ENCODE measurements at regions of chr17 and their contacts with region 1.

Region 1: GRCh38 chr17:65231662-65232335 is 94.6 kb downstream of the RGS9 start:
- DNase-seq: peak in 6 of 9 donors; percentile 31 to 49 (median 39)
- ATAC-seq: peak; percentile 52
- H3K4me3 ChIP-seq: no peak overlapping the region
- H3K4me3 Mint-ChIP-seq: no peak overlapping the region
- H3K27ac ChIP-seq: no peak overlapping the region
- H3K27ac Mint-ChIP-seq: peak overlapping the region in 1 of 9 donors; percentile 51
- H3K4me1 ChIP-seq: peaks cover 14 to 24% of the 10 kb centered on the region in 2 donors
- H3K4me1 Mint-ChIP-seq: peaks cover 14 to 48% (median 18%) of the 10 kb centered on the region in 7 donors
- H3K27me3 ChIP-seq: no peaks in the 10 kb centered on the region
- H3K27me3 Mint-ChIP-seq: peaks cover 0 to 29% (median 5%) of the 10 kb centered on the region in 5 donors

Region 2: GRCh38 chr17:65074778-65075250 is 157.0 kb before region 1 on chr17:
- CTCF ChIA-PET with region 1: no interaction called
- POLR2A ChIA-PET with region 1: no interaction called
- intact Hi-C with region 1: no loop called
- DNase-seq: no peak
- ATAC-seq: no peak
- H3K4me3 ChIP-seq: no peak overlapping the region
- H3K4me3 Mint-ChIP-seq: no peak overlapping the region
- H3K27ac ChIP-seq: no peak overlapping the region
- H3K27ac Mint-ChIP-seq: no peak overlapping the region
- H3K4me1 ChIP-seq: no peaks in the 10 kb centered on the region
- H3K4me1 Mint-ChIP-seq: peaks cover 0 to 4% (median 0%) of the 10 kb centered on the region in 7 donors
- H3K27me3 ChIP-seq: no peaks in the 10 kb centered on the region
- H3K27me3 Mint-ChIP-seq: peaks cover 0 to 5% (median 0%) of the 10 kb centered on the region in 5 donors

Region 3: DNA sequence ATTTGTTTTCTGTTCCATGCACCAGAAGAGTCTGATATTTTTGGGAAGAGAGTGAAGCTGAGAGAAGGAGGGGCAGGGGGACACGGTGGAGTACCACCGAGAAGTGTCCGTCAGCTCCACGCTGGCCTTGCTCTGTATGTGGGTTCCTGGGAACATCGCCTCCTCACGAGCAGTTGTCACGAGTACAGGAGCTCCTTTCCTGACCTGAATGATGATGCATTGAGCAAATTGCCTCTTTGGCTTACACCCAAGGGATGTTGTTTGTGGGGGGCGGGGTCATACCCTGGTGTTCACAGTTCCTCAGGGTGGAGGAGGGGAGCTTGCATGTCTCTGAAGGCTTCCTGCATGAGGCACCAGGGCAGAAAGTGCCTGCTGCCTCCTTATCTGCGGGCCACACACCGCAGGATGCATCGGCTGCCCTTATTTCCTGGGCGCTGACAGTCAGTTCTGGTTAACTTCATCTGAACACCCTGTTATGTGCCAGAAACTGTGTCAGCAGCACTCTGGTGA is 58.5 kb before region 1 on chr17:
- CTCF ChIA-PET with region 1: no interaction called
- POLR2A ChIA-PET with region 1: no interaction called
- intact Hi-C with region 1: no loop called
- DNase-seq: peak; percentile 16 to 73 (median 60)
- ATAC-seq: peak; percentile 90
- H3K4me3 ChIP-seq: peak overlapping the region; percentile 8
- H3K4me3 Mint-ChIP-seq: peak overlapping the region in 6 of 10 donors; percentile 49 to 63 (median 56)
- H3K27ac ChIP-seq: peak overlapping the region; percentile 9
- H3K27ac Mint-ChIP-seq: peak overlapping the region in 4 of 9 donors; percentile 26 to 74 (median 42)
- H3K4me1 ChIP-seq: peaks cover 13 to 34% of the 10 kb centered on the region in 2 donors
- H3K4me1 Mint-ChIP-seq: peaks cover 0 to 35% (median 11%) of the 10 kb centered on the region in 7 donors
- H3K27me3 ChIP-seq: no peaks in the 10 kb centered on the region
- H3K27me3 Mint-ChIP-seq: peaks cover 0 to 4% (median 0%) of the 10 kb centered on the region in 5 donors

Region 4: DNA sequence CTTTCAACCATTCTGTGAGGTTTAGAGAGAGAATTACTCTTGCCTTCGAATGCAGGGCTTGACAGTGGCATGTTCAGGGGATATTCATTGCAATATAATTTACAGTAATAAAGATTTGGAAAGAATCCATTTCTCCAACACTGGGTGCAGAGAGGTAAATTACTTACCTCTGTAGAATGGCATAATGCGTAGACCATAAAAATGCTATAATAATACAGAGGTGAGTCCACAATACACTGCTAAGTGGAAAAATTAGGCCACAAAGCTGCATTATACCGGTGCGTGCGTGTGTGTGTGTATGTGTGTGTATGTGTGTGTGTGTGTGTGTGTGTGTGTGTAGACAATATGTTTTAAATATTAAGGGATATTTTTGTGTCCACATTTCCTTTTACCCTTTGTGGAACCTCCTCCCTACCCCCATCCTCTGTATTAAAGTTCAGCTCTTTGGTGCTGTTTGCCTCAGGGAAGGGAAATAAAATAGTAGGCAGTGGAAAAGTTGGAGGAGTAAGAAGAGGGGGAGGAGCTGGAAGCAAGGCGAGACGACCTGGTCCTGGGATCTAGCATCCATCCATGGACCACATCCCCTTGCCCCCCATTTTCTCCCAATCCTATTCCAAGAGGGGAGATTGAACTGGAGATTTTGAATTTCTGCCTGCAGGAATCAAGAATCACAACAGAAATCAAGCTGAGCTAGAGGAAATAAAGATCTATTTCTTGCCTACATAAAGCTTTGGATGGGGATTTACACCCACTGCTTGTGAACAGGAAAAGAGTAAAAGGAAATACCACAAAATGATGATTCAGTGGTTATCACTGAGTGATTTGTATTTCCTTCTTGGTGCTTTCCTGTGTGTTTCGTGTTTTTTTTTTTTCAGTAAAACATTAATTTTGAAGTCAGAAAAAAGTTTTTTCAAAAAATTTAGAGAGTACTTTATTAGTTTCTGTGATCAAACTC is 30.2 kb after region 1 on chr17:
- CTCF ChIA-PET with region 1: no interaction called
- POLR2A ChIA-PET with region 1: no interaction called
- intact Hi-C with region 1: loop called in 1 of 2 experiments (anchors 1 kb)
- DNase-seq: peak in 2 of 9 donors; percentile 9 to 10
- ATAC-seq: no peak
- H3K4me3 ChIP-seq: no peak overlapping the region
- H3K4me3 Mint-ChIP-seq: peak overlapping the region in 3 of 10 donors; percentile 30 to 59 (median 37)
- H3K27ac ChIP-seq: no peak overlapping the region
- H3K27ac Mint-ChIP-seq: peak overlapping the region in 2 of 9 donors; percentile 24 to 56
- H3K4me1 ChIP-seq: peaks cover 6 to 19% of the 10 kb centered on the region in 2 donors
- H3K4me1 Mint-ChIP-seq: peaks cover 10 to 35% (median 18%) of the 10 kb centered on the region in 7 donors
- H3K27me3 ChIP-seq: no peaks in the 10 kb centered on the region
- H3K27me3 Mint-ChIP-seq: peaks cover 0 to 15% (median 0%) of the 10 kb centered on the region in 5 donors

Region 5: GRCh38 chr17:65278050-65278819 is 46.4 kb after region 1 on chr17:
- CTCF ChIA-PET with region 1: no interaction called
- POLR2A ChIA-PET with region 1: no interaction called
- intact Hi-C with region 1: loop called in 1 of 2 experiments (anchors 5 kb)
- DNase-seq: peak in 4 of 9 donors; percentile 9 to 24 (median 11)
- ATAC-seq: no peak
- H3K4me3 ChIP-seq: no peak overlapping the region
- H3K4me3 Mint-ChIP-seq: no peak overlapping the region
- H3K27ac ChIP-seq: no peak overlapping the region
- H3K27ac Mint-ChIP-seq: no peak overlapping the region
- H3K4me1 ChIP-seq: no peaks in the 10 kb centered on the region
- H3K4me1 Mint-ChIP-seq: peaks cover 7 to 13% (median 10%) of the 10 kb centered on the region in 7 donors
- H3K27me3 ChIP-seq: no peaks in the 10 kb centered on the region
- H3K27me3 Mint-ChIP-seq: peaks cover 5 to 35% (median 11%) of the 10 kb centered on the region in 5 donors

Region 6: GRCh38 chr17:65294179-65294720 is 62.5 kb after region 1 on chr17:
- CTCF ChIA-PET with region 1: no interaction called
- POLR2A ChIA-PET with region 1: no interaction called
- intact Hi-C with region 1: loop called in 1 of 2 experiments (anchors 5 kb)
- DNase-seq: peak; percentile 15 to 70 (median 60)
- ATAC-seq: peak; percentile 86
- H3K4me3 ChIP-seq: no peak overlapping the region
- H3K4me3 Mint-ChIP-seq: no peak overlapping the region
- H3K27ac ChIP-seq: no peak overlapping the region
- H3K27ac Mint-ChIP-seq: peak overlapping the region in 1 of 9 donors; percentile 80
- H3K4me1 ChIP-seq: no peaks in the 10 kb centered on the region
- H3K4me1 Mint-ChIP-seq: peaks cover 0 to 5% (median 5%) of the 10 kb centered on the region in 7 donors
- H3K27me3 ChIP-seq: no peaks in the 10 kb centered on the region
- H3K27me3 Mint-ChIP-seq: peaks cover 0 to 18% (median 0%) of the 10 kb centered on the region in 5 donors

Region 7: DNA sequence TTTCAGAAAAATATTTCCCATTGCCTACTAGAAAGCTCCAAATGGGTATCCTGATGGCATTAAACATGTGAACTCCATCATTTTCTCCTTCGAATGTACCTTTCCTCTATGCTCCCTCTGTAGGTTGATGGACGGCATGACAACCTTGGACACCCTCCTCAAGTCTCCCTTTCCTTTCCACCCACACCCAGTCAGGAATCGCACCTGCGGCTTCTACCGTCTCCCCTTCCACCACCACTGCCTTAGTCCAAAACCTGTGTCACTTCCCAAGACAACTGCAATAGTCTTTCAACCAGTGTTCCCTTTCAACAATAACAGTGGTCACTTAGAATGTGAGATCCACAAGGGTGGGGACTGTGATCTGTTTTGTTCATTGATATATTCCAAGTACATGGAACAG is 562.8 kb after region 1 on chr17:
- CTCF ChIA-PET with region 1: interaction called, 3 read pairs
- POLR2A ChIA-PET with region 1: no interaction called
- intact Hi-C with region 1: loop called in 1 of 2 experiments (anchors 5 kb)
- DNase-seq: peak in 6 of 9 donors; percentile 11 to 36 (median 28)
- ATAC-seq: peak; percentile 37
- H3K4me3 ChIP-seq: no peak overlapping the region
- H3K4me3 Mint-ChIP-seq: no peak overlapping the region
- H3K27ac ChIP-seq: no peak overlapping the region
- H3K27ac Mint-ChIP-seq: no peak overlapping the region
- H3K4me1 ChIP-seq: no peaks in the 10 kb centered on the region
- H3K4me1 Mint-ChIP-seq: peaks cover 0 to 6% (median 0%) of the 10 kb centered on the region in 7 donors
- H3K27me3 ChIP-seq: no peaks in the 10 kb centered on the region
- H3K27me3 Mint-ChIP-seq: peaks cover 0 to 7% (median 0%) of the 10 kb centered on the region in 5 donors

Region 8: DNA sequence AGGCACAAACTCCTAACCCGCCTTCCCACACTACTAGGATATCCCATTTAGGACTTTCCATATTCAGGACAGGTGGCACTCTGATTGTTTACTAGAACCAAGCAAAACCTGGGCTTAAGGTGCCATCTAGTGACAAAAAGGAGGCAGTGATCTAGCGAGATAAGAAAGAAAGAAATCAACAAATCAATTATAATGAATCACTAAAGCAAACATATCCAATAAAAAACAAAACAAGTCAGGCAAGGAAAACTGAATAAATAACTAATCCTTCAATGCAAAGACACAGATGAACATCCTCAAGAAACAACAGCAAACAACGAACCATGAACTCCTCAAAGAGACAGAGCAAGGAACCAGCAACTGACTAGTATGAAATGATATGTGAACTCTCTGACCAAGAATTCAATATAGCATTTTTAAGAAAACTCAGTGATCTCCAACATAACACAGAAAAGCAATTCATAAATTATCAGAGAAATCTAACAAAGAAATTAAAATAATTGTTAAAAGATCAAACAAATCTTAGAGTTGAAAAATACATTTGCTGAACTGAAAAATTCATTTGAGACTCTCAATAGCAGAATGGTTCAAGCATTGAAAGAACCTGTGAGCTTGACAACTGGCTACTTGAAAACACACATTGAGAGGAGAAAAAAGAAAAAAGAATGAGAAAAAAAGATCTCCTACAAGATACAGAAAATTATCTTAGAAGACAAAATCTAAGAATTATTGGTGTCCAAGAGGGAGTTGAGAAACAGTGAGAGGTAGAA is 756.5 kb after region 1 on chr17:
- CTCF ChIA-PET with region 1: no interaction called
- POLR2A ChIA-PET with region 1: no interaction called
- intact Hi-C with region 1: loop called in 1 of 2 experiments (anchors 10 kb)
- DNase-seq: peak in 1 of 9 donors; percentile 5
- ATAC-seq: no peak
- H3K4me3 ChIP-seq: no peak overlapping the region
- H3K4me3 Mint-ChIP-seq: no peak overlapping the region
- H3K27ac ChIP-seq: no peak overlapping the region
- H3K27ac Mint-ChIP-seq: no peak overlapping the region
- H3K4me1 ChIP-seq: no peaks in the 10 kb centered on the region
- H3K4me1 Mint-ChIP-seq: no peaks in the 10 kb centered on the region
- H3K27me3 ChIP-seq: no peaks in the 10 kb centered on the region
- H3K27me3 Mint-ChIP-seq: peaks cover 0 to 16% (median 0%) of the 10 kb centered on the region in 5 donors

Region 9: GRCh38 chr17:66165513-66166123 is 933.8 kb after region 1 on chr17:
- CTCF ChIA-PET with region 1: interaction called, 9 read pairs
- POLR2A ChIA-PET with region 1: no interaction called
- intact Hi-C with region 1: loop called in 1 of 2 experiments (anchors 1 kb)
- DNase-seq: peak in 7 of 9 donors; percentile 23 to 58 (median 53)
- ATAC-seq: peak; percentile 57
- H3K4me3 ChIP-seq: no peak overlapping the region
- H3K4me3 Mint-ChIP-seq: no peak overlapping the region
- H3K27ac ChIP-seq: no peak overlapping the region
- H3K27ac Mint-ChIP-seq: no peak overlapping the region
- H3K4me1 ChIP-seq: no peaks in the 10 kb centered on the region
- H3K4me1 Mint-ChIP-seq: no peaks in the 10 kb centered on the region
- H3K27me3 ChIP-seq: no peaks in the 10 kb centered on the region
- H3K27me3 Mint-ChIP-seq: no peaks in the 10 kb centered on the region